CD8-positive, alpha-beta T cell (primary cell): ENCODE measurements at regions of chr6 and their contacts with region 1.

Region 1: GRCh38 chr6:154733012-154733625 is at the start of gene SCAF8:
- DNase-seq: peak; percentile 75 to 94 (median 86)
- ATAC-seq: peak; percentile 60
- H3K4me3 ChIP-seq: peak within 1 kb of the TSS; percentile 63 to 84
- H3K4me3 Mint-ChIP-seq: peak within 1 kb of the TSS; percentile 87
- H3K27ac ChIP-seq: peak within 1 kb of the TSS; percentile 90 to 96
- H3K27ac Mint-ChIP-seq: peak within 1 kb of the TSS; percentile 98
- H3K4me1 ChIP-seq: peaks cover 43% of the 10 kb centered on the region
- H3K4me1 Mint-ChIP-seq: peaks cover 42% of the 10 kb centered on the region
- H3K27me3 ChIP-seq: no peaks in the 10 kb centered on the region
- H3K27me3 Mint-ChIP-seq: peaks cover 2% of the 10 kb centered on the region
- CTCF ChIP-seq: peak; percentile 80
- total RNA-seq, gene SCAF8: 85.0 to 86.6 TPM

Region 2: DNA sequence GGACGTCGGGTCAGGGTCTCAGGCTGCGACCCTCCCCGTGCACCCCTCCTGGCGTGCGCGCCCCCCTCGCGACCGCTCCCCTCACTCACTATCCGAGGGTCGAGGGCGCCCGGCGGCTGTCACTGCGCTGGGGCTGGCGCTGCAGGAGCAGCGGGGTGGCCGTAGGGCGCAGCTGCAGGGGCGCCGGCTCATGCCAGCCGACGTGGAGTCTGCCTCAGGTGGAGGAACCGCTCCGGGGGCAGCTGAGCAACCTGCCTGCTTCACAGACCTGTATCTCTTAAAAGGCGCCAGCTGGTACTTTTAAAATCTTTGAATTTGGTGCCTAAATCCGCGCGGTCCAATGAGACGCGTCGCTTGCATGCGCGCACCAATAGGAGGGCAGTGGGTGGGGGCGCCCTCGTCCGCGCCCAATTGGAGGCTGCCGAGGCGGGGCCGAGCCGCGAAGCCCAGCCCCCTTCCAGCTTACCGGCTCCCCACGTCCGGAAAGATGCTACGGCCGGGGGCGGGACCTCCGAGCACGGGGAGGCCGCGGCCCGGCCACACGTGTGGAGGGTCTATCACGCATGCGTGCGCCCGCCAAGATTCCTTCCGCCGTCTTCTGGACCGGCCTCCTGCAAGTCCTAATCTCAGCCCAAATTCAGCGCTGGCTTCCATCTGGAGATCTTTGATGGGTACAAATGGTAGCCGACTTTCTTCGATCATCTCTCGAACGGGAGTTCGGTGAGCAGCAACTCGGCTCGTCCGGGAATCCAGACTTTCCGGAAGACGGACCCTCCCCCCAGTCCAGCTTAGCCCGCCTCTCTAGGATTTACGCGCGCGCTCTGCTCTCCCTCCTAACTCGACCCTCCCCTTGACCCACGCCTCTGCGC is 1750.1 kb before region 1 on chr6 and contains the start of gene FBXO5:
- CTCF ChIA-PET with region 1: no interaction called
- POLR2A ChIA-PET with region 1: no interaction called
- intact Hi-C with region 1: loop called in 1 of 2 experiments (anchors 2 kb)
- DNase-seq: peak; percentile 94 to 99 (median 97)
- ATAC-seq: peak; percentile 93
- H3K4me3 ChIP-seq: peak within 1 kb of the TSS; percentile 70 to 85
- H3K4me3 Mint-ChIP-seq: peak within 1 kb of the TSS; percentile 99
- H3K27ac ChIP-seq: peak within 1 kb of the TSS; percentile 73 to 94
- H3K27ac Mint-ChIP-seq: peak within 1 kb of the TSS; percentile 97
- H3K4me1 ChIP-seq: peaks cover 18% of the 10 kb centered on the region
- H3K4me1 Mint-ChIP-seq: peaks cover 48% of the 10 kb centered on the region
- H3K27me3 ChIP-seq: no peaks in the 10 kb centered on the region
- H3K27me3 Mint-ChIP-seq: no peaks in the 10 kb centered on the region
- CTCF ChIP-seq: no peak
- total RNA-seq, gene FBXO5: 3.0 to 3.9 TPM

Region 3: DNA sequence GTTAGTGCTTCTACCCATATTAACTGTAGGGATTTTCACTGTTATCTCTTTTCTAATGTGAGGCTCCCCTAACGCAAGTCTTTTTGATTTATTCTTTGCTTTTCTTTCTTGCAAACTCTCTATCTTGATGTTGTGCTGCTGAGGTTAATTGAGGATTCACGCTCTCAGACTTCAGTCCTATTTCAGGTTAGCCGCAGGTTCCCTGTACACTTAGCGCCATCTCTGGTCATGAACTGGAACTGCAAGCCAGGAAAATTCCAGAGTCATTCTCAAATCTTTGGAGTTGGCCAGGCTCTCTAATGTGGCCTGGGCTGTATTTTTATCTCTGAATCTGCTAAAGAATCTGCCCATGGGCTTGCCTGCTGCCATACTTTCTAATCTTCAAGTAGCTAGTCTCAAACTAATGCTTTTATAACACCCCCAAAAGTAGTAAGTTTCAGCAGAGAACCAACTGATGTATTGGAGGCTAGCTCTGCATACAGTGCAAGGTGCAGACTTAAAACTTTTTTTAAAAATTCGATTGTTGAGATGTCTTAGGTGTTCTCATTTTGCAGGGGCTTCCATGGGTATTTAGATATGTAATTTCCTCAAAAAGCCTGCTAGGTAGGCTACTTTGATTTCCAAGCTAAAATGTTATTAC is 785.2 kb before region 1 on chr6:
- CTCF ChIA-PET with region 1: no interaction called
- POLR2A ChIA-PET with region 1: no interaction called
- intact Hi-C with region 1: no loop called
- DNase-seq: peak in 1 of 9 experiments; percentile 8
- ATAC-seq: no peak
- H3K4me3 ChIP-seq: no peak overlapping the region
- H3K4me3 Mint-ChIP-seq: no peak overlapping the region
- H3K27ac ChIP-seq: no peak overlapping the region
- H3K27ac Mint-ChIP-seq: no peak overlapping the region
- H3K4me1 ChIP-seq: no peaks in the 10 kb centered on the region
- H3K4me1 Mint-ChIP-seq: no peaks in the 10 kb centered on the region
- H3K27me3 ChIP-seq: no peaks in the 10 kb centered on the region
- H3K27me3 Mint-ChIP-seq: peaks cover 5% of the 10 kb centered on the region
- CTCF ChIP-seq: peak; percentile 53

Region 4: GRCh38 chr6:154156135-154156896 is 576.8 kb before region 1 on chr6:
- CTCF ChIA-PET with region 1: no interaction called
- POLR2A ChIA-PET with region 1: no interaction called
- intact Hi-C with region 1: loop called in 1 of 2 experiments (anchors 5 kb)
- DNase-seq: peak; percentile 34 to 84 (median 60)
- ATAC-seq: peak; percentile 92
- H3K4me3 ChIP-seq: peak overlapping the region; percentile 28 to 40
- H3K4me3 Mint-ChIP-seq: peak overlapping the region; percentile 82
- H3K27ac ChIP-seq: peak overlapping the region; percentile 42 to 83
- H3K27ac Mint-ChIP-seq: peak overlapping the region; percentile 92
- H3K4me1 ChIP-seq: peaks cover 37% of the 10 kb centered on the region
- H3K4me1 Mint-ChIP-seq: peaks cover 56% of the 10 kb centered on the region
- H3K27me3 ChIP-seq: no peaks in the 10 kb centered on the region
- H3K27me3 Mint-ChIP-seq: no peaks in the 10 kb centered on the region
- CTCF ChIP-seq: peak; percentile 76

Region 5: GRCh38 chr6:154675602-154676088 is 57.5 kb before region 1 on chr6:
- CTCF ChIA-PET with region 1: interaction called, 11 read pairs
- POLR2A ChIA-PET with region 1: interaction called, 3 read pairs
- intact Hi-C with region 1: loop called (anchors 1 to 2 kb)
- DNase-seq: peak; percentile 77 to 95 (median 85)
- ATAC-seq: peak; percentile 100
- H3K4me3 ChIP-seq: no peak overlapping the region
- H3K4me3 Mint-ChIP-seq: no peak overlapping the region
- H3K27ac ChIP-seq: no peak overlapping the region
- H3K27ac Mint-ChIP-seq: no peak overlapping the region
- H3K4me1 ChIP-seq: no peaks in the 10 kb centered on the region
- H3K4me1 Mint-ChIP-seq: no peaks in the 10 kb centered on the region
- H3K27me3 ChIP-seq: no peaks in the 10 kb centered on the region
- H3K27me3 Mint-ChIP-seq: no peaks in the 10 kb centered on the region
- CTCF ChIP-seq: peak; percentile 100

Region 6: DNA sequence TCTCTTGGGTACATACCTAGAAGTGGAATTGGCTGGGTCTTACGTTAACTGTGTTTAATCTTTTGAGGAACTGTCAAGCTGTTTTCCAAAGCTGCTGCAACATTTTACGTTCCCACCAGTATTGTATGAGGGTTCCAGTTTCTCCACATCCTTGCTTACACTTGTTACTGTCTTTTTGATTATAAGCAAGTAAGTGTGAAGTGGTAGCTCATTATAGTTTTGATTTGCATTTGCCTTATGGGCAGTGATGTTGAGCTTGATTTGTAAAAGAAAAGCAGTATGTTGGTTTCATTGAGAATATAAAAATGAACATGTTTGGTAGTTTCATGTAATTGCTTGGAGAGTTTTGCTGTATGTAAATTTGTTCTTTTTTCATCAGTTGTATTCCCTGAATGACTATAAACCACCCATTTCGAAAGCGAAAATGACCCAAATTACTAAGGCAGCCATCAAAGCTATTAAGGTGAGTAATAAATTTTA is 40.5 kb after region 1 on chr6:
- CTCF ChIA-PET with region 1: no interaction called
- POLR2A ChIA-PET with region 1: no interaction called
- intact Hi-C with region 1: loop called in 1 of 2 experiments (anchors 5 kb)
- DNase-seq: peak in 1 of 9 experiments; percentile 23
- ATAC-seq: no peak
- H3K4me3 ChIP-seq: no peak overlapping the region
- H3K4me3 Mint-ChIP-seq: no peak overlapping the region
- H3K27ac ChIP-seq: peak overlapping the region in 1 of 2 experiments; percentile 14
- H3K27ac Mint-ChIP-seq: no peak overlapping the region
- H3K4me1 ChIP-seq: peaks cover 4% of the 10 kb centered on the region
- H3K4me1 Mint-ChIP-seq: peaks cover 59% of the 10 kb centered on the region
- H3K27me3 ChIP-seq: no peaks in the 10 kb centered on the region
- H3K27me3 Mint-ChIP-seq: no peaks in the 10 kb centered on the region
- CTCF ChIP-seq: no peak

Region 7: DNA sequence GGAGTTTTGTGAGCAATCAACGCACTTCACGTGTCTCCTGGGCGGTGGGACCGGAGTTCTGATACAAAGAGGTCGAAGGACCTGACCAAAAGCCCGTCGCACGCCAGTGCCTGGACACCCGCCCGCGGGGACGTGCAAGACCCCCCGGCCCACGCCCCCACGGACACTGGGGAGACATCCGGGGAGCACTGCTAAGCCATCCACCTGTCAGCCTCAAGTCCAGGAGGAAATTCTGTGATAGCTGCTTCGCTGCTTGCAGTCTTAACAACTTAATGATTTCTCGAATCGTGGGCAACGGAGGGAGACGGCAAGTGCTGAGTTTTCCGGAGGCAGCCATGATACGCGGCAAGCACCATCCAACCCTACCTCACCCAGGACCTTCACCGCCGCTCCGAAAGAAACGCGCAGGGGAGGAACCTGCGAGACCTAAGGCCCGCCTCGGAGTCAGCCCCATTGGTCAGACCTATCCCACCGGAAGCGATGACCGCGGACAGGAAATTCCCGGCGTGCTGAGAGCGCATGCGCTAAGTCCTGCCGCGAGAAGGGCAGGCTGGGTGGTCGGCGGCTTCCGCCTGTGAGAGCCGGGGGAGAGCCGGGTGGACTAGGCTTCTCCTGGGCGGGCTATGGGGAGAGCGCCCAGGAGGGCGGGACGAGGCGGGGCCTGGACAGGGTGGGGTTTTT is 581.1 kb after region 1 on chr6 and contains the start of gene TFB1M:
- CTCF ChIA-PET with region 1: no interaction called
- POLR2A ChIA-PET with region 1: no interaction called
- intact Hi-C with region 1: loop called (anchors 1 to 5 kb)
- DNase-seq: peak; percentile 91 to 99 (median 97)
- ATAC-seq: peak; percentile 93
- H3K4me3 ChIP-seq: peak within 1 kb of the TSS; percentile 92 to 97
- H3K4me3 Mint-ChIP-seq: peak within 1 kb of the TSS; percentile 98
- H3K27ac ChIP-seq: peak within 1 kb of the TSS; percentile 83 to 87
- H3K27ac Mint-ChIP-seq: peak within 1 kb of the TSS; percentile 97
- H3K4me1 ChIP-seq: peaks cover 7% of the 10 kb centered on the region
- H3K4me1 Mint-ChIP-seq: peaks cover 35% of the 10 kb centered on the region
- H3K27me3 ChIP-seq: no peaks in the 10 kb centered on the region
- H3K27me3 Mint-ChIP-seq: no peaks in the 10 kb centered on the region
- CTCF ChIP-seq: no peak
- total RNA-seq, gene TFB1M: 6.3 to 7.9 TPM